ENCODE measurements at regions of chr6 and their contacts with region 1.

Region 1: GRCh38 chr6:7615611-7616383 is 25.8 kb downstream of the SNRNP48 start:
- DNase-seq: peak in 1 of 2 donors; percentile 54
- ATAC-seq: peak; percentile 32 to 75 (median 56)
- H3K4me3 ChIP-seq: peak overlapping the region in 5 of 10 donors; percentile 17 to 33 (median 21)
- H3K27ac ChIP-seq: no peak overlapping the region
- H3K4me1 ChIP-seq: peaks cover 0 to 29% (median 8%) of the 10 kb centered on the region in 9 donors
- H3K27me3 ChIP-seq: no peaks in the 10 kb centered on the region
- CTCF ChIP-seq: peak; percentile 63 to 82 (median 74)

Region 2: GRCh38 chr6:6676910-6677441 is 938.8 kb before region 1 on chr6:
- intact Hi-C with region 1: loop called in 1 of 10 experiments (anchors 10 kb)
- DNase-seq: peak; percentile 66 to 81
- ATAC-seq: peak; percentile 63 to 91 (median 86)
- H3K4me3 ChIP-seq: no peak overlapping the region
- H3K27ac ChIP-seq: peak overlapping the region; percentile 14 to 77 (median 63)
- H3K4me1 ChIP-seq: peaks cover 4 to 51% (median 27%) of the 10 kb centered on the region in 9 donors
- H3K27me3 ChIP-seq: no peaks in the 10 kb centered on the region
- CTCF ChIP-seq: peak; percentile 91 to 98 (median 96)

Region 3: GRCh38 chr6:7270320-7271204 is 345.2 kb before region 1 on chr6:
- intact Hi-C with region 1: loop called in 6 of 10 experiments (anchors 2 to 10 kb)
- DNase-seq: no peak
- ATAC-seq: no peak
- H3K4me3 ChIP-seq: no peak overlapping the region
- H3K27ac ChIP-seq: no peak overlapping the region
- H3K4me1 ChIP-seq: peaks cover 0 to 23% (median 0%) of the 10 kb centered on the region in 9 donors
- H3K27me3 ChIP-seq: no peaks in the 10 kb centered on the region
- CTCF ChIP-seq: no peak

Region 4: DNA sequence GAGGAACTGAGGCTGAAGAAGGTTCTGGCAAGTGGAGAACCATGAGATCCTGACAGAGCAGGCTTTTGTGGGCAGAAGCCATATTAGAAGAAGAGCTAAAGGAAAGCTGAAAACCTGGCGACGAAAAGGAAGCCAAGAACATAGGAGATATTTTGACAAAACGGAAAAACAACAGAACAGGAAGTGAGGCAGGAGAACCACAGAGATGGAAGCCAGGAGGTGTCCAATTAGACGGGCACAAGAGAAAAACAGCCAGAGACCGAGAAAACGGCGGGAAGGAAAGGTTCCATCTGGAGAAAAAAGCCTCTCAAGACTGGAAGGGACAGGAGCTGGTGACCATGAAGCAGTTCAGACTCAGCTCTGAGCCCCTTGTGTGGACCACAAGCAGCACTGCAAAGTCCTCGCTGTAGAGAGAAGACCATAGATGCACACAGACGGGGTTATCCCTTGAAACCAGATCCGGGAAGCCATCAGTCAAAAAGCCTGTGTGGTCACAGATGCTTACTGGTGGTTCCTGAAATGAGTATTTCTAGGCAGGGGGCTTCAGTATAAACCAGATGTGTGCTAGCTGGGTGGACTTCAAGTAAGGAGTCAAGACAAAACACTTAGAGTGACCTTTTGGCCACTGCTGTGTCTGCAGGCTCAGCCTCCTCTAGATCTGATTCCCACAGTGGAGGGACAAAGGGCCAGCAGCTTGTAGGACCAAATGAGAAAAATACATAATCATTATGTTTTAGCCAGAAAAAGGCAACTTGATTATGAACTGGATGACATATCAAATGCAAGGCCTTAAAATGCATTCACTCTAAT is 333.5 kb before region 1 on chr6:
- intact Hi-C with region 1: loop called in 9 of 10 experiments (anchors 2 to 10 kb)
- DNase-seq: no peak
- ATAC-seq: no peak
- H3K4me3 ChIP-seq: no peak overlapping the region
- H3K27ac ChIP-seq: no peak overlapping the region
- H3K4me1 ChIP-seq: peaks cover 0 to 23% (median 0%) of the 10 kb centered on the region in 9 donors
- H3K27me3 ChIP-seq: no peaks in the 10 kb centered on the region
- CTCF ChIP-seq: no peak

Region 5: DNA sequence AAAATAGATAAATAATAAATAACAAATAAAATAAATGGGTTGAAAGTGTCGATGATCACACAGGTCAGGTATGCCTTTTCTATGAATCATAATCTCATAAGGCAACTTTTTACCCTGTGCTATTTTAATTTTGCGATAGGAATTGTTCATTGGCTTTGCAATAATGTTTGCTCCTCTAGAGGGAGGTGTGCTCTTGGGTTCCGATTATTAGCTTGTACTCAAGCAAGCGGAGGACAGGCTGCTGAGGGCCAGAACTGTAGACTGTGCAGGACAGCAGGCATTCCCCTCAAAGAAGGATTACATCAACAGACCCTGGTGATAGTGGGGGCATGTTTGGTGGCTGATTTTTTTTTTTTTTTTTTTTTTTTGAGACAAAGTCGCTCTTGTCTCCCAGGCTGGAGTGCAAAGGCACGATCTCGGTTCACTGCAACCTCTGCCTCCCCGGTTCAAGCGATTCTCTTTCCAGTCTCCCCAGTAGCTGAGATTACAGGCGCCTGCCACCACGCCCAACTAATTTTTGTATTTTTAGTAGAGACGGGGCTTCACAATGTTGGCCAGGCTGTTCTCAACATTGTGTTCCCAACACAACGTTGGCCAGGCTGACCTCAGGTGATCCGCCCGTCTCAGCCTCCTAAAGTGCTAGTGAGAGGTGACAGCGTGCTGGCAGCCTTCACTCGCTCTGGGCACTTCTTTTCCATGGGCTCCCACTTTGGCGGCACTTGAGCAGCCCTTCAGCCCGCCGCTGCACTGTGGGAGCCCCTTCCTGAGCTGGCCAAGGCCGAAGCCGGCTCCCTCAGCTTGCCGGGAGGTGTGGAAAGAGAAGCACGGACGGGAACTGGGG is 190.6 kb before region 1 on chr6:
- intact Hi-C with region 1: loop called in 6 of 10 experiments (anchors 5 to 10 kb)
- DNase-seq: peak; percentile 25 to 67
- ATAC-seq: peak; percentile 80 to 95 (median 93)
- H3K4me3 ChIP-seq: no peak overlapping the region
- H3K27ac ChIP-seq: peak overlapping the region in 5 of 10 donors; percentile 28 to 75 (median 52)
- H3K4me1 ChIP-seq: peaks cover 0 to 3% (median 0%) of the 10 kb centered on the region in 9 donors
- H3K27me3 ChIP-seq: no peaks in the 10 kb centered on the region
- CTCF ChIP-seq: peak in 8 of 9 donors; percentile 23 to 65 (median 51)

Region 6: GRCh38 chr6:7489376-7489775 is 126.4 kb before region 1 on chr6:
- intact Hi-C with region 1: no loop called
- DNase-seq: no peak
- ATAC-seq: no peak
- H3K4me3 ChIP-seq: no peak overlapping the region
- H3K27ac ChIP-seq: no peak overlapping the region
- H3K4me1 ChIP-seq: no peaks in the 10 kb centered on the region
- H3K27me3 ChIP-seq: no peaks in the 10 kb centered on the region
- CTCF ChIP-seq: no peak

Region 7: GRCh38 chr6:8570256-8570920 is 954.6 kb after region 1 on chr6:
- intact Hi-C with region 1: no loop called
- DNase-seq: no peak
- ATAC-seq: no peak
- H3K4me3 ChIP-seq: no peak overlapping the region
- H3K27ac ChIP-seq: no peak overlapping the region
- H3K4me1 ChIP-seq: no peaks in the 10 kb centered on the region
- H3K27me3 ChIP-seq: no peaks in the 10 kb centered on the region
- CTCF ChIP-seq: no peak